ENCODE measurements at regions of chr12 and their contacts with region 1.

Region 1: GRCh38 chr12:118520214-118521035 is 144.1 kb downstream of the SUDS3 start:
- DNase-seq: no peak
- ATAC-seq: peak; percentile 68

Region 2: GRCh38 chr12:118537481-118537917 is 17.1 kb after region 1 on chr12:
- intact Hi-C with region 1: loop called (anchors 2 kb)
- DNase-seq: peak; percentile 66
- ATAC-seq: peak; percentile 90

Measured in Right ventricle myocardium inferior (tissue), 1 donor.